GM13976 (cell line): ENCODE measurements at regions of chr3 and their contacts with region 1.

Region 1: GRCh38 chr3:128680602-128681368 is 30.2 kb upstream of the RPN1 start:
- DNase-seq: peak; percentile 98
- CTCF ChIP-seq: peak; percentile 98

Region 2: GRCh38 chr3:128794770-128795649 is 114.2 kb after region 1 on chr3:
- in situ Hi-C with region 1: loop called (anchors 10 kb)
- DNase-seq: peak; percentile 82
- CTCF ChIP-seq: peak; percentile 78